Activated T-helper 2 cell treated with anti-CD3 and anti-CD28 coated beads, Interferon-gamma antibody, Interleukin-2, Interleukin-4, amounts not matched to agents 10 μg/mL and 5 μg/mL and 100 μg/mL, durations not matched to agents 14 hours and 24 hours and 36 hours (primary cell): ENCODE measurements at regions of chr1 and their contacts with region 1.

Region 1: GRCh38 chr1:207077470-207078377 is 10.9 kb upstream of the C4BPB start:
- DNase-seq: peak; percentile 47
- H3K4me3 Mint-ChIP-seq: no peak overlapping the region
- H3K27ac Mint-ChIP-seq: no peak overlapping the region
- H3K4me1 Mint-ChIP-seq: peaks cover 3% of the 10 kb centered on the region
- H3K27me3 Mint-ChIP-seq: peaks cover 36% of the 10 kb centered on the region

Region 2: DNA sequence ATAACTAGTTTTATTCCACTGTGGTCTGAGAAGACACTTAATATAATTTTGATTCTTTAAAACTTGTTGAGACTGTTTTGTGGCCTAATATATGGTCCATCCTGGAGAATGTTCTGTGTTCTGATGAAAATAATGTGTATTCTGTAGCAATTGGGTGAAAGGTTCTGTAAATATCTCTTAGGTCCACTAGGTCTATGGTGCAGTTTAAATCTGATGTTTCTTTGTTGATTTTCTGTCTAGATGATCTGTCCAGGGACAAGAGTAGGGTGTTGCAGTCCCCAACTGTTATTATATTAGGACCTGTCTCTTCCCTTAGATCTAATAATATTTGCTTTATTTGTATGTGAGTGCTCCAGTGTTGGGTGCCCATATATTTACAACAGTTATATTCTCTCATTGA is 1193.9 kb before region 1 on chr1:
- intact Hi-C with region 1: no loop called
- DNase-seq: no peak
- H3K4me3 Mint-ChIP-seq: no peak overlapping the region
- H3K27ac Mint-ChIP-seq: no peak overlapping the region
- H3K4me1 Mint-ChIP-seq: peaks cover 4% of the 10 kb centered on the region
- H3K27me3 Mint-ChIP-seq: peaks cover 29% of the 10 kb centered on the region

Region 3: DNA sequence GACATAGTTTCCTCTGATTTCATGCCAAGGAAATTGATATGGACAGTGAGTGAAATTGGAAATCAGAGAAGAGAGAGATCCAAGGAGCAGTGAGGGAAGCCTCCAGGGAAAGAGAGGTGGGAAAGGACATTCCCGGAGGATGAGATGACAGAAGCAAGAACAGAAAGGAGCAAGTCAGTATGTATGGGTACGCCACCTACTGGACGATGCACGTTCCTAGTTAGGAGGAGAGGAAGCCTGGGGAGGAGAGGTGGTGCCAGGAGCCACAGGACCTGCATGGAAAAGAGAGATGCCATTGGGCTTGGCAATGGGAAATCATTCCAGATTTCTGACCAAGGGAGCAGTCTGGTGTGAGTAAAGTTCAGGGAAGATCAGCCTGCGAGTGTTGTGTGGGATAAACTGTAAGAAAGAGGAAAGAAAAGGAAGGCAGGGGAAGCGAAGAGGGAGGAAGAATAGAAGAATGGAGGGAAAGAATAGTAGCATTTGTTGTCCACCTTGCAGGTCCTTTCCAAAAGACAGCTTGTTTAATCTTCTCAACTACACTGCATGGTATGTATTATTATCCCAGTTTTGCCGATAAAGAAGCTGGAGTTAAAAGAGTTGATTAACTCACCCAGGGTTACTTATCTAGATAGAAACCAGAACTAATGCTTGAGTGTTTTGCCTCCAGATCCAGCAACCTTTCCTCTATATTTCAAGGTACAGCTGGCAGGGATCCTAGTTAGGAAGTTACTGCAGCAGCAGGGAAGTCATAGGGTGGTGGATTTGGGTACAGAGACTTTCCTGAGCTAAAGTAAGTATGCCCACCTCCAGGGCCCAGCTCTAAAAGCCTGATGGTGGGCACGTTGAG is 72.5 kb before region 1 on chr1:
- intact Hi-C with region 1: loop called (anchors 10 kb)
- DNase-seq: no peak
- H3K4me3 Mint-ChIP-seq: no peak overlapping the region
- H3K27ac Mint-ChIP-seq: no peak overlapping the region
- H3K4me1 Mint-ChIP-seq: peaks cover 2% of the 10 kb centered on the region
- H3K27me3 Mint-ChIP-seq: peaks cover 24% of the 10 kb centered on the region

Region 4: GRCh38 chr1:207052911-207053769 is 24.6 kb before region 1 on chr1 and contains the start of gene PFKFB2:
- intact Hi-C with region 1: loop called (anchors 1 kb)
- DNase-seq: peak; percentile 90
- H3K4me3 Mint-ChIP-seq: peak within 1 kb of the TSS; percentile 91
- H3K27ac Mint-ChIP-seq: peak within 1 kb of the TSS; percentile 75
- H3K4me1 Mint-ChIP-seq: peaks cover 30% of the 10 kb centered on the region
- H3K27me3 Mint-ChIP-seq: peaks cover 7% of the 10 kb centered on the region
- total RNA-seq, gene PFKFB2: 1.9 and 2.2 TPM in 2 replicates

Region 5: DNA sequence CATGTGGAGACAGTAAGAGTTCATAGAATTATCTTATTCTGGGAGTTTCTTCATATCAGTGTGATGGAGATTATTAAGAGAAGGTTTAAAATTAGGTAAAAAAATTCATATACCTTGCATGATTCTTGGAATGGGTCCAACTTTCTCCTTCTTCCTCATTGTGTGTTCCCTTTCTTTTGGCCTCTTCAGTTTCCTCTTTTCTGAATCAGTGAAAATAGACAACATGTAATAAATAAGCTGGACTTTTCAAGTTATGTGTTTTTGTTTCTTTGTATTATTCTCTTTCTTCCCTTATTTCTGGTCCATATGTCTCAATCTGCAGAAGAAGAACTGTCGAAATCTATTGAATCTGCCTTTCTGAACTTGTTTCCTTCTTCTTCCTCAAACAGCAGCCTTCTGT is 56.9 kb after region 1 on chr1:
- intact Hi-C with region 1: no loop called
- DNase-seq: no peak
- H3K4me3 Mint-ChIP-seq: no peak overlapping the region
- H3K27ac Mint-ChIP-seq: no peak overlapping the region
- H3K4me1 Mint-ChIP-seq: no peaks in the 10 kb centered on the region
- H3K27me3 Mint-ChIP-seq: peaks cover 4% of the 10 kb centered on the region